ENCODE measurements at regions of chr10 and their contacts with region 1.

Region 1: DNA sequence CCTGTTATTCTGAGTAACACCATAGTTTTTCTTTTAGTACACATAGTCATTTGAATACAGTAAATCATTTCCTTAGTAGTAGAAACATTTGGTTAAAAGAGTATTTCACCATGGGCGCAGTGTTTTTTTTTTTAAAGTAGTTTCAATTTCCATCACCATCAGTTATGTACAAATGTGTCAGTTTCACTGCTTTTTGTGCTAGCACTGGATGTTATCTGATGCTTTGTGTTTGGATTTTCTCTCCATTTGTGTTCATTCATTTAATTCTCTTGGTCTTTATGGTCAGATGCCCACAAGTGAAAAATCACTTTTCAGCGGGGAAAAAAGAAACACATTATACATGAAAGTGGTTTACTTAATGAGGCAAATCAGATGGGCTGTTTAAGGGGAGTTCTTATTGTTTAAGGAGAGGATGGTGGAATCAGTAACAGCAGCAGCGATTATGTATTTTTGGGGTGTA is 16.0 kb upstream of the HK1 start:
- DNase-seq: no peak
- H3K4me3 ChIP-seq: no peak overlapping the region
- H3K27ac ChIP-seq: peak overlapping the region; percentile 20; the same call in 1 of the 2 replicates
- H3K4me1 ChIP-seq: no peaks in the 10 kb centered on the region
- H3K27me3 ChIP-seq: no peaks in the 10 kb centered on the region
- CTCF ChIP-seq: no peak

Region 2: DNA sequence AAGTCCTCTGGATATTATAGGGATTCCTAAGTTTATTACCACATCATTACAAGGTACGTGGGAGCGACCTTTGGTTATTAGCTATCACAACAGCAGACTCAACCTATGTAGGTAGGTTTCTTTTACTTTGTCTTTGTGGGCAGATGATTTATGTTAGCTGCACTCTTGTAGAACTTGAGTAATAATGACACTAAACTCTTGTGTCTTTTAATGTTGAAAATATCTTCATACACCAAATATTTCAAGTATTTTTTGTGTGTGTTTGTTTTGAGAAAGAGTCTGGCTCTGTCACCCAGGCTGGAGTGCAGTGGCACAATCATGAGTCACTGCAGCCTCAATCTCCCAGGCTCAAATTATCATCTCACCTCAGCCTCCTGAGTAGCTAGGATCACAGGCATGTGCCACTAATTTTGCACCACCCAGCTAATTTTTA is 101.5 kb before region 1 on chr10:
- CTCF ChIA-PET with region 1: no interaction called
- POLR2A ChIA-PET with region 1: no interaction called
- intact Hi-C with region 1: no loop called
- DNase-seq: peak in 1 of 2 experiments; percentile 80
- H3K4me3 ChIP-seq: no peak overlapping the region
- H3K27ac ChIP-seq: peak overlapping the region; percentile 25; the same call in 1 of the 2 replicates
- H3K4me1 ChIP-seq: 0 out of 2 replicates have a peak, but pooled peaks cover 5% of the 10 kb centered on the region
- H3K27me3 ChIP-seq: no peaks in the 10 kb centered on the region
- CTCF ChIP-seq: no peak

Region 3: DNA sequence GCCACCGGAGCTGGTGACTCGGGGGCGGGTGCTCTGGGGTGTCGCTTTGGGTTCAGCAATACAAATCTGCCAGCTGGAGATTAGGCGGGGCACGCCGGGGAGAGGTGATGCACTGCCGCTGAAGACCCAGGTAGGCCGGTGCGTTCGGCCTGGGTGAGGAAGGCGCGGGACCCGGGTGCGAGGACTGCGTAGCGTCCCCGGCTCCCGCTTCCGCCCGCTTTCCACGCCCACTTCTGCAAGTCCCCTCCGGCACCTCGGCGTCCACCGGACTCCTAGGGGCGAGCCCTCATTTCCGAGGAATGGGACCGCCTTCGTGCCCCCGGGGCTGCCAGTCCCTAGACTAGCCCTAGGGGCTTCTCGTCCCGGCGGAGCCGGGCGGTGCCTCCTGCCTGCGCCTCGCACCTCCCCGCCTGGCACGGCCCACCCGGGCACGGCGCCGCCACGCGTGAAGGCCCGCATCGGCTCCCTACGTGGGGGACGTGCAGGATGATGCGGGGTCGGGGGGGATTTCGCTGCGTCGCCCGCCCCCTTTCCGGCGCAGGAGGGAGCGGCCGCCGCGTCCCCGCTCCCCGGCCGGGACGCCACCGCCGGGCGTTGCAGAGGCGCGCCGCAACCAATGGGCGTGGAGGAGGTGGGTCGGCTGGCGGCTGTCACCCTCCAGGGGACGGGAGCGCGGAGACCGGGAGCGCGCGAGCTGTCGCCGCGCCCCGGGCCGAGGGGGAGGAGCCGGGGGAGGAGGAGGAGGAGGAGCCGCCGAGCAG is 56.0 kb after region 1 on chr10:
- CTCF ChIA-PET with region 1: no interaction called
- POLR2A ChIA-PET with region 1: no interaction called
- intact Hi-C with region 1: loop called (anchors 5 kb)
- DNase-seq: peak; percentile 74 to 95
- H3K4me3 ChIP-seq: peak overlapping the region; percentile 97
- H3K27ac ChIP-seq: peak overlapping the region; percentile 73
- H3K4me1 ChIP-seq: peaks cover 64% of the 10 kb centered on the region
- H3K27me3 ChIP-seq: no peaks in the 10 kb centered on the region
- CTCF ChIP-seq: no peak